GM12878 (cell line): ENCODE measurements at regions of chr5 and their contacts with region 1.

Region 1: GRCh38 chr5:43623048-43623680 is 20.2 kb downstream of the NNT start:
- DNase-seq: no peak
- ATAC-seq: peak; percentile 27; the same call in 1 of the 3 replicates
- H3K4me3 ChIP-seq: no peak overlapping the region
- H3K27ac ChIP-seq: no peak overlapping the region
- H3K4me1 ChIP-seq: no peaks in the 10 kb centered on the region
- H3K27me3 ChIP-seq: no peaks in the 10 kb centered on the region
- CTCF ChIP-seq: no peak
- EP300 ChIP-seq: no peak
- POLR2A ChIP-seq: no peak
- RAD21 ChIP-seq: no peak

Region 2: DNA sequence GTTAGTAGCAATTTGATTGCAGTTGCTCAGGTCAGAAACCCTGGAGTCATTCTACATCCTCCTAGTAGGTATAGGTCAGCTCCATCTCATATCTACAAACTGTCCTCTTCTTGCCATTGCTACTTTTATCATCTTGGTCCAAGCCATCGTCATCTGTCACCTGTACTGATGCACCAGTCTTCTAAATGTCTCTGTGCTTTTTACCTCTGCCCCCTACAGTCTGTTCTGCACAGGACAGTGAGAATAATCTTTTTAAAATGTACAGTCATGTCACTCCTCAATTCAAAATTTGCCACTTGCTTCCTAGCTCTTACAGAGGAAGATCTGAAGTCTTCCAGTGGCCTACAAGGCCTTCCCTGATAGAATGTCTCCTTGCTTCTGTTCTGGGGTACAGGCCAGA is 13.4 kb before region 1 on chr5:
- CTCF ChIA-PET with region 1: interaction called, 15 read pairs
- POLR2A ChIA-PET with region 1: interaction called, 3 read pairs
- RAD21 ChIA-PET with region 1: no interaction called
- SMC1A ChIA-PET with region 1: interaction called, 8 read pairs
- in situ Hi-C with region 1: no loop called
- intact Hi-C with region 1: no loop called
- DNase-seq: no peak
- ATAC-seq: peak; percentile 96
- H3K4me3 ChIP-seq: no peak overlapping the region
- H3K27ac ChIP-seq: no peak overlapping the region
- H3K4me1 ChIP-seq: no peaks in the 10 kb centered on the region
- H3K27me3 ChIP-seq: no peaks in the 10 kb centered on the region
- CTCF ChIP-seq: peak; percentile 42 to 59 (median 54); a peak in 5 of 6 replicates
- EP300 ChIP-seq: no peak
- POLR2A ChIP-seq: no peak
- RAD21 ChIP-seq: peak; percentile 56

Region 3: DNA sequence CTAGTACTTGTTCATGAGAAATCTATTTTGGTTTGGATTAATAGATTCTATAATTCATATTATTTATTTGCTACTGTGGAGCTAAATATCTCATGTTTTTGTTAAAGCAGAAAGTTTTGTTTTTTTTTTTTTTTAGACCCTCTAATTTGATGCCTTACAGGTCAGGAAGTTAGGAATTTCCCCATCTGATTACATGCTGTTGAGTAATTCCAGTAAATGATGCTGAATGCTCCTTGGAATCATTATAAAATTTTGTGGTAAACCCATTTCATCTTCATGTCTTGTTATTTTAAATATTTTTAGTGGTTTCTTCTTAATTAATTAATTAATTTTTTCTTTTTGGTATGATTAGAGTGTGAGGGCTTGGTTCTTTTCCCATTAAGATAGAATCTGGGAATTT is 15.4 kb after region 1 on chr5:
- CTCF ChIA-PET with region 1: interaction called, 46 read pairs
- POLR2A ChIA-PET with region 1: no interaction called
- RAD21 ChIA-PET with region 1: no interaction called
- SMC1A ChIA-PET with region 1: interaction called, 3 read pairs
- in situ Hi-C with region 1: no loop called
- intact Hi-C with region 1: no loop called
- DNase-seq: no peak
- ATAC-seq: no peak
- H3K4me3 ChIP-seq: no peak overlapping the region
- H3K27ac ChIP-seq: no peak overlapping the region; the same call in 1 of the 2 replicates
- H3K4me1 ChIP-seq: no peaks in the 10 kb centered on the region; the same call in none of the 2 replicates
- H3K27me3 ChIP-seq: no peaks in the 10 kb centered on the region
- CTCF ChIP-seq: no peak
- EP300 ChIP-seq: no peak
- POLR2A ChIP-seq: no peak
- RAD21 ChIP-seq: no peak